Prostate gland (tissue), 2 donors: ENCODE measurements at regions of chr18 and their contacts with region 1.

Region 1: GRCh38 chr18:35040988-35041814 is at the start of gene MAPRE2:
- DNase-seq: peak; percentile 94
- H3K4me3 ChIP-seq: peak within 1 kb of the TSS; percentile 65 to 68
- H3K27ac ChIP-seq: peak within 1 kb of the TSS; percentile 76
- H3K4me1 ChIP-seq: no peaks in the 10 kb centered on the region
- H3K27me3 ChIP-seq: no peaks in the 10 kb centered on the region
- CTCF ChIP-seq: no peak
- POLR2A ChIP-seq: peak; percentile 84
- total RNA-seq, gene MAPRE2: 16.1 to 17.2 TPM

Region 2: GRCh38 chr18:35110554-35111485 is 69.6 kb after region 1 on chr18:
- intact Hi-C with region 1: loop called (anchors 5 kb)
- DNase-seq: no peak
- H3K4me3 ChIP-seq: no peak overlapping the region
- H3K27ac ChIP-seq: no peak overlapping the region
- H3K4me1 ChIP-seq: no peaks in the 10 kb centered on the region
- H3K27me3 ChIP-seq: no peaks in the 10 kb centered on the region
- CTCF ChIP-seq: no peak
- POLR2A ChIP-seq: no peak

Region 3: GRCh38 chr18:35136248-35136647 is 95.0 kb after region 1 on chr18:
- intact Hi-C with region 1: loop called (anchors 5 kb)
- DNase-seq: no peak
- H3K4me3 ChIP-seq: no peak overlapping the region
- H3K27ac ChIP-seq: no peak overlapping the region
- H3K4me1 ChIP-seq: no peaks in the 10 kb centered on the region
- H3K27me3 ChIP-seq: no peaks in the 10 kb centered on the region
- CTCF ChIP-seq: no peak
- POLR2A ChIP-seq: no peak